Ascending aorta (tissue), 2 donors: ENCODE measurements at regions of chr2 and their contacts with region 1.

Region 1: GRCh38 chr2:75146606-75147332 is 52.6 kb downstream of the TACR1 start:
- DNase-seq: peak in 1 of 2 donors; percentile 84
- H3K4me3 ChIP-seq: no peak overlapping the region
- H3K27ac ChIP-seq: peak overlapping the region in 1 of 2 donors; percentile 60
- H3K4me1 ChIP-seq: peaks cover 0 to 13% of the 10 kb centered on the region in 2 donors
- H3K27me3 ChIP-seq: no peaks in the 10 kb centered on the region
- CTCF ChIP-seq: no peak

Region 2: GRCh38 chr2:74845217-74846011 is 301.4 kb before region 1 on chr2:
- intact Hi-C with region 1: loop called (anchors 10 kb)
- DNase-seq: peak; percentile 93 to 95
- H3K4me3 ChIP-seq: no peak overlapping the region
- H3K27ac ChIP-seq: peak overlapping the region; percentile 87 to 92
- H3K4me1 ChIP-seq: peaks cover 10 to 29% of the 10 kb centered on the region in 2 donors
- H3K27me3 ChIP-seq: no peaks in the 10 kb centered on the region
- CTCF ChIP-seq: no peak

Region 3: GRCh38 chr2:74893332-74893731 is 253.4 kb before region 1 on chr2:
- intact Hi-C with region 1: loop called (anchors 5 kb)
- DNase-seq: peak in 1 of 2 donors; percentile 78
- H3K4me3 ChIP-seq: no peak overlapping the region
- H3K27ac ChIP-seq: peak overlapping the region; percentile 73 to 76
- H3K4me1 ChIP-seq: peaks cover 3 to 9% of the 10 kb centered on the region in 2 donors
- H3K27me3 ChIP-seq: no peaks in the 10 kb centered on the region
- CTCF ChIP-seq: no peak

Region 4: GRCh38 chr2:74958274-74959105 is 188.3 kb before region 1 on chr2 and contains the start of gene POLE4:
- intact Hi-C with region 1: loop called (anchors 10 kb)
- DNase-seq: peak; percentile 61 to 95
- H3K4me3 ChIP-seq: peak within 1 kb of the TSS; percentile 65 to 79
- H3K27ac ChIP-seq: peak within 1 kb of the TSS; percentile 85 to 91
- H3K4me1 ChIP-seq: peaks cover 3 to 5% of the 10 kb centered on the region in 2 donors
- H3K27me3 ChIP-seq: no peaks in the 10 kb centered on the region
- CTCF ChIP-seq: no peak
- total RNA-seq, gene POLE4: 57.5 TPM

Region 5: DNA sequence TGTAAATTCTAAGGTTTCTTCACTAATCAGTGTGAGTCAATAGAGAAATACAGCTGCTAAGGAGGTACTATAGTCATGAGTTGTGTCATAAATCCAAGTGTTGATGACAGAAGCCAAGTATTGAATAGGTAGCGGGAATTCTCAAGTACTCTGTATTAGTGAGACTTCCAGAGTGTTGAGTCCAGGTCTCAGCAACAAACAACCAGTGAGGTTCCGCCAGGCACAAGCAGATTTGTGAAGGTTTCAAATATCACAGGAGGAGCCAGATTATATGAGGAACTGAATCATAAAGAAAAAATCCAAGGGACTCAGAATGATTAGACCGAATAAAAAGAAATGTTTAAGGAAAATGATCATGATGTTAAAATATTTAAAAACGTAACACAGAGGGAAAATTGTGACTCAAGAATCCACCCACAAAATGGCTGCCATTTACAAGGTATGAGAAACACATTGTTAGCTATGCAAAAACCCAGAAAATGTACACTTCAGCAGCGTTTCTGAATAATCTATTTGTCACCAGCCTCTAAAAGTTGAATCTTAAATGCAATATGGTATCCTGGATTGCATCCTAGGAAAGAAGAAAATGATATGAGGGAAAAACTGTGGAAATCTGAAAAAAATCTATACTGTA is 441.3 kb after region 1 on chr2:
- intact Hi-C with region 1: no loop called
- DNase-seq: no peak
- H3K4me3 ChIP-seq: no peak overlapping the region
- H3K27ac ChIP-seq: no peak overlapping the region
- H3K4me1 ChIP-seq: no peaks in the 10 kb centered on the region
- H3K27me3 ChIP-seq: no peaks in the 10 kb centered on the region
- CTCF ChIP-seq: no peak